Motor neuron (in vitro differentiated cells): ENCODE measurements at regions of chr6 and their contacts with region 1.

Region 1: GRCh38 chr6:17156112-17156921 is 54.5 kb downstream of the STMND1 start:
- ATAC-seq: peak; percentile 55 to 80 (median 68)
- H3K4me3 ChIP-seq: no peak overlapping the region
- H3K27ac ChIP-seq: no peak overlapping the region
- H3K4me1 ChIP-seq: no peaks in the 10 kb centered on the region

Region 2: GRCh38 chr6:17584241-17584803 is 428.0 kb after region 1 on chr6:
- in situ Hi-C with region 1: loop called in 7 of 9 experiments (anchors 10 to 25 kb)
- ATAC-seq: peak; percentile 54 to 97 (median 85)
- H3K4me3 ChIP-seq: peak overlapping the region; percentile 15 to 21 (median 19)
- H3K27ac ChIP-seq: no peak overlapping the region
- H3K4me1 ChIP-seq: no peaks in the 10 kb centered on the region

Region 3: GRCh38 chr6:17599885-17600526 is 443.7 kb after region 1 on chr6 and contains the start of gene FAM8A1:
- in situ Hi-C with region 1: loop called in 7 of 9 experiments (anchors 10 to 25 kb)
- ATAC-seq: peak; percentile 89 to 96 (median 94)
- H3K4me3 ChIP-seq: peak within 1 kb of the TSS; percentile 66 to 93 (median 89)
- H3K27ac ChIP-seq: peak within 1 kb of the TSS; percentile 95 to 96
- H3K4me1 ChIP-seq: peaks cover 3 to 14% of the 10 kb centered on the region in 2 donors
- total RNA-seq, gene FAM8A1: 13.7 to 55.7 (median 27.4) TPM

Region 4: DNA sequence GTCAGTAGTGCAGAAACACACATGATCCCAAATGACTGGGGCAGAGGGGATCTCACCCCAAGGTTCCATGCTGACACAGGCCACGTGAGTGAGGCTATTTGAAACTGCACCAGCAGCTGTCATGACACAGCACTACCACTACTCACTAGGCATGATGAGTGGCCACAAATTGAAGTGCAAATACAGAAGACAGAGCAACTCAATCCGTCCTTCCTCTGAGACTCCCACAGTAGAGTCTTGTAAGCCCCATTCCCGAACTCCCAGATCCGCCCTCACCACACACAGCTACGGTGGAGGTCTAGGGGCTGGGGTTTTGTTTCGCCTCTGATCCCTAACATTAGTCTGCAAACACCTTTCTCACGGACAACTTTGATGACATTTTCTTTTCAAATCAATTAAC is 663.7 kb after region 1 on chr6:
- in situ Hi-C with region 1: loop called in 5 of 9 experiments (anchors 25 kb)
- ATAC-seq: peak in 6 of 8 experiments; percentile 14 to 94 (median 68)
- H3K4me3 ChIP-seq: no peak overlapping the region
- H3K27ac ChIP-seq: no peak overlapping the region
- H3K4me1 ChIP-seq: peaks cover 7 to 12% of the 10 kb centered on the region in 2 donors

Region 5: DNA sequence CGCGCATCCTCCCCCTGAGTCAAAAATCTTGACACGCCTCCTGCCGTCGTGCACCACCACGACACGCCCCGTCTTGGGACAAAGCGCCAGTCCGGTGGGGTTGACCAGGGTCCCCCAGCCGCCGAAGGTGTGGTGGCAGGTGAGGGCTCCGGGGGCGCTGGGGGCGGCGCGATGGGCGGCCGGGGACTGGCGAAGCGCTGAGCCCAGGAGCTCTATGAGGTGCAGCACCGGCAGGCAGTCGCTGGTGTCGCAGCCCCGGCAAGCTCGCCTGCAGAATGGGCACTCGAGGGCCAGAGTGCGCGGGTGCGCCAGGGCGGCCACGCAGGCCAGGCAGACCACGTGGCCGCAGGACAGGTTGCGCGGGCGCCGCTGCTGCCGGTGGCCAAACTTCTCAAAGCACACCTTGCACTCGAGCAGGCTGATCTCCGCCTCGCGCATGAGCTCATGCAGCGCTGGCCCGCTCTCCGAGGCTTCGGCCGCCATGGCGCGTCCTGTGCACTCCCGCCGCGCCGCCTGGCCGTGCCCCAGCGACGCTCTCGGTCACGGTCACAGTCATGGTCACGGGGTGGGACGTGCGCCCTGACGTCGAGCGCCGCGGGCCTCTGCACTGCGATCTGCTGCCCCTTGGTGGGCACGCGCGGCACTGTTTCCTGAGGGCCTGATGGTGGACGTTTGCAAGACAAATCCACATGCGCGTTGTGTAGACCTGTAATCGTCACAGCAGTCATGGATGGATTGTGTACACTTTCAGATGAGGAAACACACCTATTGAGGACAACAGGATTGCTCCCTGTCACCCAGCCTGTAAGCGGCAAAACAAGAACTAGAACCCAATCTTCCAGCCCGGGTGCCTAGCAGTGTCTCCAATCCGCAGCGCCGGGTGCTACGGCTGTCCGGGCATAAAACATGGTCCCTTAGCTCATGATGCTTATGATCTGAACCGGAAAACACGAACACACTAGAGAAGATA is 966.1 kb after region 1 on chr6 and contains the start of gene NHLRC1:
- in situ Hi-C with region 1: loop called in 1 of 9 experiments (anchors 25 kb)
- ATAC-seq: peak; percentile 88 to 99 (median 98)
- H3K4me3 ChIP-seq: peak within 1 kb of the TSS; percentile 21 to 38 (median 33)
- H3K27ac ChIP-seq: no peak within 1 kb of the TSS
- H3K4me1 ChIP-seq: peaks cover 0 to 2% of the 10 kb centered on the region in 2 donors
- total RNA-seq, gene NHLRC1: 0.25 to 2.4 (median 1.6) TPM

Region 6: GRCh38 chr6:18323935-18324705 is 1167.8 kb after region 1 on chr6:
- in situ Hi-C with region 1: loop called in 1 of 9 experiments (anchors 25 kb)
- ATAC-seq: peak; percentile 36 to 85 (median 64)
- H3K4me3 ChIP-seq: no peak overlapping the region
- H3K27ac ChIP-seq: no peak overlapping the region
- H3K4me1 ChIP-seq: no peaks in the 10 kb centered on the region